Sigmoid colon (tissue), 7 donors: ENCODE measurements at regions of chr19 and their contacts with region 1.

Region 1: GRCh38 chr19:14354445-14354844 is 26.8 kb upstream of the ADGRE5 start:
- DNase-seq: no peak
- H3K4me3 ChIP-seq: no peak overlapping the region
- H3K27ac ChIP-seq: no peak overlapping the region
- H3K4me1 ChIP-seq: no peaks in the 10 kb centered on the region
- H3K27me3 ChIP-seq: peaks cover 0 to 4% (median 0%) of the 10 kb centered on the region in 3 donors
- CTCF ChIP-seq: no peak
- EP300 ChIP-seq: no peak
- POLR2A ChIP-seq: no peak

Region 2: GRCh38 chr19:14198384-14199376 is 155.8 kb before region 1 on chr19:
- intact Hi-C with region 1: loop called (anchors 5 kb)
- DNase-seq: no peak
- H3K4me3 ChIP-seq: no peak overlapping the region
- H3K27ac ChIP-seq: no peak overlapping the region
- H3K4me1 ChIP-seq: peaks cover 0 to 42% (median 24%) of the 10 kb centered on the region in 4 donors
- H3K27me3 ChIP-seq: no peaks in the 10 kb centered on the region
- CTCF ChIP-seq: no peak
- EP300 ChIP-seq: no peak
- POLR2A ChIP-seq: no peak